ENCODE measurements at regions of chr19 and their contacts with region 1.

Region 1: GRCh38 chr19:12979974-12980373 is 10.6 kb downstream of the DAND5 start:
- H3K4me3 Mint-ChIP-seq: no peak overlapping the region
- H3K27ac Mint-ChIP-seq: no peak overlapping the region
- H3K4me1 Mint-ChIP-seq: peaks cover 9% of the 10 kb centered on the region
- H3K27me3 Mint-ChIP-seq: peaks cover 9% of the 10 kb centered on the region

Region 2: GRCh38 chr19:13022859-13023636 is 43.1 kb after region 1 on chr19:
- intact Hi-C with region 1: no loop called
- H3K4me3 Mint-ChIP-seq: peak overlapping the region; percentile 76
- H3K27ac Mint-ChIP-seq: peak overlapping the region; percentile 21
- H3K4me1 Mint-ChIP-seq: peaks cover 26% of the 10 kb centered on the region
- H3K27me3 Mint-ChIP-seq: peaks cover 54% of the 10 kb centered on the region

Region 3: GRCh38 chr19:13093407-13094105 is 113.6 kb after region 1 on chr19:
- intact Hi-C with region 1: loop called (anchors 2 kb)
- H3K4me3 Mint-ChIP-seq: peak overlapping the region; percentile 92
- H3K27ac Mint-ChIP-seq: peak overlapping the region; percentile 98
- H3K4me1 Mint-ChIP-seq: peaks cover 43% of the 10 kb centered on the region
- H3K27me3 Mint-ChIP-seq: peaks cover 5% of the 10 kb centered on the region

Measured in dendritic cell treated with granulocyte-macrophage colony-stimulating factor and Interleukin-4, amounts not matched to agents 40 ng/mL and 50 ng/mL, for 4 days (primary cell).